Heart right ventricle (tissue), 16 donors: ENCODE measurements at regions of chr3 and their contacts with region 1.

Region 1: DNA sequence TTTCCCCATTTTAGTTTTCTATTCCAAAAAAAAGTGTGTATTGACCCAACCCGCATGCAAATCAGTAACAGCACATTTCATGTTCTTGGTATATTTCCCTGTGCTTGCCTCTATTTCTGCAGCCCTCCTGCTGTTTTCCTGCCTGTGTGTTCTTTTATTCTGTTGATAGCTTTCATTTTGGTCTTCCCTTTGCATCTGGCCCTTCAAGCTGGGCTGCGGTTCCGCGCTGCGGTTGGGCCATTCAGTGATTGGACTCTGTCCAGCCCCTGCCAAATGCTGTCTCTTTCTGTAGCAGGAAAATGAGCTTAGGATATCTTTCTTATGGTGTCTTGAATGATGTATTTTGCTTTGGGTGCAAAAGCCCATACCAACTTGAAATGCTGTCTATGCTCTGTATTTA is 49.9 kb downstream of the ZNF621 start:
- DNase-seq: no peak
- ATAC-seq: no peak
- H3K4me3 ChIP-seq: no peak overlapping the region
- H3K27ac ChIP-seq: no peak overlapping the region
- H3K4me1 ChIP-seq: no peaks in the 10 kb centered on the region
- H3K27me3 ChIP-seq: no peaks in the 10 kb centered on the region
- CTCF ChIP-seq: no peak

Region 2: DNA sequence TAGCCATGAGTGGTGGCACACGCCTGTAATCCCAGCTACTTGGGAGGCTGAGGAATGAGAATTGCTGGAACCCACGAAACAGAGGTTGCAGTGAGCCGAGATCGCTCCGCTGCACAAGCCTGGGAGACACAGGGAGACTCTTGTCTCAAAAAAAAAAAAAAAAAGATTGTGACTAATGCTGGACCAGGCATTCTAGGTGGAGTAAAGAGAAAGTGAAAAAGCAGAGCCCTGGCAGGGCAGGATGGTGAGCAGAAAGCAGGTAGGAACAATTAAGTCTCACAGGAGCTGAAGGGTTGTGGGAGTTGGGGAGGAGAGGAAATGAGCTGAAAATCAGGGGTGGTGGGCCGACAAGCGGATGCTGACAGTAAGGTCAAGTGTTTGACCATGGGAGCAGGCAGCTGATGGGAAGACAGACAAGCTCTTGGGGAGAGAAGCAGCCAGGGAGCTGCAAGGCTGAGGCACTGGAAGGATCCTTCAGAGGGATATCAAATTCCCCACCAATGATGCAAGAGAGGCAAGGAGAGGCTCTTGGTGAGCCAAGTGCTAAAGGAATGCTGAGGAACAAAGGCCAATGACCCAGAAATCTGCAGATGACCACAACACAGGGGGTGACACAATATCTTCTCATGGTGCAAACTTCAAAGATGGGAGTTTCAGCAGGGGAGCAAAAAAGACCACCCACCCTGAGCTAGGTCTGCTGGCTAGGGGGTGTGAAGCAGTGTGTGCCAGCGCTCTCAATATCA is 1136.2 kb after region 1 on chr3:
- intact Hi-C with region 1: loop called in 1 of 10 experiments (anchors 5 kb)
- DNase-seq: no peak
- ATAC-seq: no peak
- H3K4me3 ChIP-seq: no peak overlapping the region
- H3K27ac ChIP-seq: no peak overlapping the region
- H3K4me1 ChIP-seq: peaks cover 0 to 12% (median 0%) of the 10 kb centered on the region in 9 donors
- H3K27me3 ChIP-seq: no peaks in the 10 kb centered on the region
- CTCF ChIP-seq: no peak